Transverse colon (tissue), 4 donors: ENCODE measurements at regions of chr2 and their contacts with region 1.

Region 1: GRCh38 chr2:172772633-172773032 is 37.0 kb downstream of the RAPGEF4 start:
- DNase-seq: no peak
- H3K4me3 ChIP-seq: no peak overlapping the region
- H3K27ac ChIP-seq: no peak overlapping the region
- H3K4me1 ChIP-seq: no peaks in the 10 kb centered on the region
- H3K27me3 ChIP-seq: no peaks in the 10 kb centered on the region
- CTCF ChIP-seq: no peak
- EP300 ChIP-seq: no peak
- POLR2A ChIP-seq: no peak

Region 2: DNA sequence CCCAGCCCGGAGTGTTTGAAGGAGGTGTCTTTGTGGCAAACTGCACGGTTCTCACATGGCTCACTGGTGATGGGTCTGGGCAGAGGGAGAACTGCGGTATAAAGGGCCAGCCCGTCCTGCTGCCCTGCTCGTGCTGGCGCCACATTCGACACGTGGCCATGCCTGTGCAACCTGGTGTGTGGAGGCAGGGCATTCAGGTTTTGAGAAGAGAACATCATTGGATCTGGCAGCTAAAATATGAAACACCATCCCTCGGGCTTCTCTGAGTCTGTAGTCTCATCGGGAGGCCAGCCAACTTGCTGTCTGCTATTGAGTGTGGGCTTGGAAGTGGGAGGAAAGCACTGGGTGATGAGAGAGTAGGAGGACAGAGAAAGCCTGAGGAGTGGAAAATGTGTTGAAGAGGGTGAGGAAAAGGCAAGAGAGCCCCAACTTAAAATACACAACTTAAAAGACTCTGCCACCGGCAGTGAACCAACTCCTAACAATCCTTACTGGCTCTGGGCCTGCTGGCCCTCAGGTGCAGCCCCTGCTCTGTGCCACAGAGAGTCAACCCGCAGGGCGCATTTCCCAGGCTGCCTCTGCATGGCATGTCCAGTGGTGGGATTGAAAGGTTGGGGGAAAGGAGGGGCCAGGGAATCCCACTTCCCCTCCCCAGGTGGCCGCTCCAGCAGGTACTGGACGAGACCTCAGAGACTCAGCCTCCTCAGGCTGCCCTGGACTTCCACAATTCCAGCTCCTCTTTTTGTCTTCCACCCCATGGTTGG is 557.3 kb before region 1 on chr2:
- in situ Hi-C with region 1: no loop called
- intact Hi-C with region 1: no loop called
- DNase-seq: no peak
- H3K4me3 ChIP-seq: no peak overlapping the region
- H3K27ac ChIP-seq: no peak overlapping the region
- H3K4me1 ChIP-seq: peaks cover 0 to 2% (median under 1%) of the 10 kb centered on the region in 4 donors
- H3K27me3 ChIP-seq: no peaks in the 10 kb centered on the region
- CTCF ChIP-seq: no peak
- EP300 ChIP-seq: no peak
- POLR2A ChIP-seq: no peak

Region 3: DNA sequence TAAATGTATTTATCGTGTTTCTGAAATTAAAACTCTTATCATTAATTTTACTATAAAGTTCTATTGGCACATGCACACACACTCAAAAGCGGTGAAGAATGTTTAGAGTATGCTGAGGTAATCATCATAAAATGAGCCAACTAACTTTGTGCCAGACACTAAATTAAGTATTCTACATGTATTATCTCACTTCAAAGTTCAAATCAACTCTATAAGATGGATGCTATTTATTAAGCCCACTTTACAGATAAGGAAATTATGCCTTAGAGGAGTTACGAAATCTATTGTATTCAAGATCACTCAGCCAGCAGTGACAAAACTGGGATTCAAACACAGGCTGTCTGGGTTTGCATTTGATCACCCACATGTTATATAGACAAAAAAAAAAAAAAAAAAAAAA is 1450.8 kb after region 1 on chr2:
- in situ Hi-C with region 1: no loop called
- intact Hi-C with region 1: loop called (anchors 10 kb)
- DNase-seq: no peak
- H3K4me3 ChIP-seq: no peak overlapping the region
- H3K27ac ChIP-seq: no peak overlapping the region
- H3K4me1 ChIP-seq: no peaks in the 10 kb centered on the region
- H3K27me3 ChIP-seq: no peaks in the 10 kb centered on the region
- CTCF ChIP-seq: no peak
- EP300 ChIP-seq: no peak
- POLR2A ChIP-seq: no peak